Right cardiac atrium (tissue), 5 donors: ENCODE measurements at regions of chr7 and their contacts with region 1.

Region 1: DNA sequence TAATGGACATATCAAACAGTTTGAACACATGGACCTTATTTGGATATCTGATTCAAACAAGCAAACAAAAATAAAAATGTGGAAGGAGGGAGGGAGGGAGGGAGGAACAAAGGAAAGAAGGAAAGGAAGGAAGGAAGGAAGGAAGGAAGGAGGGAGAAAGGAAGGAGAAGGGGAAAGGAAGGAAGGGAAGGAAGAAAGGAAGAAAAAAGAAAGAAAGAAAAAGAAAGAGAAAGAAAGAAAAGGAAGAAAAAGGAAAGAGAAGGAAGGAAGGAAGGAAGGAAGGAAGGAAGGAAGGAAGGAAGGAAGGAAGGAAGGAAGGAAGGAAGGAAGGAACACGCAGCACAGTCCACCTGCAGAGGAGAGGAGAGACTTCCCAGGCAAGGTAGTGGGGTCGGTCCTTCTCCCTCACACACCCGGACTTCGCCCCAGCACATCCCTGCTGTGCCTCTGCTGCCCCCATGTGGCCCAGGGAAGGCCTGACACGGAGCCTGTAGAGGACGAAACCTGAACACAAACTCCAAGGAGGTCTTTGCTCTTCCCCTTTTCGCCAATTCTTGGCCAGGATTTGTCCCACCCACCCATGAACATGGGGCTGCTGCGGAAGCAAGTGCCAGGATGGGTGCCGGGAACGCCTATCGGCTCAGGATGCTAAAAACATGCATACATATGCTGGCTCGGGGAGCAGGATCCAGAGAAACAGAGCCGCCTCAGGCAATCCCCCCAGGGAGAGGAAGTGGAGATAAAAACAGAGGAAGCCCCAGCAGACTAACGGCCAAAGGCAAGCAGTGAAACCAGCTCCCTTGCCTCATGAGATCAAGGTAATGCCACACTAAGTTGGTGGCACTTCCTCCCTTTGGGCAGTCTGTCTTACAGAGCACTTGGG is 52.3 kb upstream of the DGKI start:
- DNase-seq: peak; percentile 84 to 94 (median 94)
- ATAC-seq: peak; percentile 92 to 93
- H3K4me3 ChIP-seq: no peak overlapping the region
- H3K27ac ChIP-seq: peak overlapping the region; percentile 71
- H3K4me1 ChIP-seq: peaks cover 3% of the 10 kb centered on the region
- H3K27me3 ChIP-seq: no peaks in the 10 kb centered on the region

Region 2: DNA sequence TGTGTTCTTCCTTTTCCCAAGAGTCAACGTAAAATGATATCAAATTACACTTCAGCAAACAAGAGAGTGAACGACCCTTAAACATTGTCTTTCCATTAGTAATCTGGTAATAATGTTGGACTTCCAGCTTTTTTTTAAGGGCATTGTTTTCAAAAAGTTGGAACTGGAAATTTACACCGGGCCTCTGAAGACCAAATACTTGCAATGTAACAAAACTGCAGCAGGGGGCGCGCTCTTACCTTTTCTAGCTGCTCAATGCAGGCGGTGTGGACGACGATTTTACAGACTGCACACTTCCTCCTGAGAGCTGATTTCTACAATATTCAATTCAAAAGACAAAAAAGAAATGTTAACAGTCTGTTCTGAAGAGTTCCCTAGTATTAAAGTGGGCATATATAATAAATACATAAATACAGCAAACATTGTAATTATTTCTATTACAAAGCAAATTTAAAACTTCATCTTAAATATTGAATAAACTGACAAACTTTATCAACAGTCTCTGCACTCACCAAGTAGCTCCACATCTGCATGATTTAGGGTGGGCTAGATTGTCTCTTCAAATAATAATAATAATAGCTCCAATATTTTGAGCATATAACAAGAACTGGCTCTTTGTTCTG is 242.7 kb before region 1 on chr7:
- intact Hi-C with region 1: loop called (anchors 5 kb)
- DNase-seq: peak; percentile 82 to 92 (median 84)
- ATAC-seq: peak; percentile 78 to 83
- H3K4me3 ChIP-seq: no peak overlapping the region
- H3K27ac ChIP-seq: no peak overlapping the region
- H3K4me1 ChIP-seq: peaks cover 2% of the 10 kb centered on the region
- H3K27me3 ChIP-seq: no peaks in the 10 kb centered on the region

Region 3: GRCh38 chr7:137820677-137821420 is 78.2 kb before region 1 on chr7:
- intact Hi-C with region 1: loop called in 1 of 4 experiments (anchors 2 kb)
- DNase-seq: peak; percentile 84 to 94 (median 92)
- ATAC-seq: peak; percentile 93 to 95
- H3K4me3 ChIP-seq: no peak overlapping the region
- H3K27ac ChIP-seq: peak overlapping the region; percentile 14
- H3K4me1 ChIP-seq: no peaks in the 10 kb centered on the region
- H3K27me3 ChIP-seq: no peaks in the 10 kb centered on the region

Region 4: GRCh38 chr7:137867289-137867688 is 31.8 kb before region 1 on chr7:
- intact Hi-C with region 1: loop called in 1 of 4 experiments (anchors 2 kb)
- DNase-seq: no peak
- ATAC-seq: peak; percentile 88 to 93
- H3K4me3 ChIP-seq: no peak overlapping the region
- H3K27ac ChIP-seq: no peak overlapping the region
- H3K4me1 ChIP-seq: peaks cover 2% of the 10 kb centered on the region
- H3K27me3 ChIP-seq: no peaks in the 10 kb centered on the region

Region 5: DNA sequence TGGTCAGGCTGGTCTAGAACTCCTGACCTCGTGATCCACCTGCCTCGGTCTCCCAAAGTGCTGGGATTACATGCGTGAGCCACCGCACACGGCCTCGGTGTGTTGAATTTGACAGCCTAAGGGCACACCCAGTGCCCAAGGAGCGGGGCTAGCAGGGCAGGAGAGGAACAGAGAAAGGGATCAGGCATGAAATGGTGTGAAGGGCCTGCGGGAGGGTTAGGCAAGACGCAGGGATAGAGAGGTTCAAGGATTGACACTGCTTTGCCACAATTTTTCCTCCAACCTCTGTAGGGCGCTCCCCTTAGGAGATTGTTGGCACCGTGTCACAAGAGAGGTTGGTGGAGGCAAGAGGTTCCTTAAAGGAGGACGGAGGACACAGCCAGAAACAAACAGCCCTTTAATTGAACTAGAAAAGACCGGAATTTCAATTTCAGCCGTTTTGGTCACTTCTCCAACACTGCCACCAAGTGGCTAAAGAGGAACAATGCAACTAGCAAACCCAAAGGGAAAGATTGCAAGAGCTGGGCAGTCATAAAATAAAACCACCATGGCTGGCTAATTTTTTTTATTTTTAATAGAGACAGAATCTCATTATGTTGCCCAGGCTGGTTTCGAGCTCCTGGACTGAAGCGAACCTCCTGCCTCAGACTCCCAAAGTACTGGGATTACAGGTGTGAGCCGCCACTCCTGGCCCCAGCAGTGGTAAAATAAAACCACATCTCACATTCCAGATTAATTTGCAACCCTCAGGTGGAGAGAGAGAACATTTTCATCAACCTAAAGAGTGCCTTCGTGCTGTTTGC is 109.7 kb after region 1 on chr7:
- intact Hi-C with region 1: loop called (anchors 1 to 2 kb)
- DNase-seq: peak in 1 of 3 donors; percentile 48
- ATAC-seq: peak; percentile 53 to 64
- H3K4me3 ChIP-seq: no peak overlapping the region
- H3K27ac ChIP-seq: no peak overlapping the region
- H3K4me1 ChIP-seq: no peaks in the 10 kb centered on the region
- H3K27me3 ChIP-seq: no peaks in the 10 kb centered on the region